Activated naive CD8-positive, alpha-beta T cell treated with anti-CD3 and anti-CD28 coated beads, Interleukin-2, amount 10 ng/mL, durations not matched to agents 7 days and 5 days (primary cell): ENCODE measurements at regions of chr2 and their contacts with region 1.

Region 1: DNA sequence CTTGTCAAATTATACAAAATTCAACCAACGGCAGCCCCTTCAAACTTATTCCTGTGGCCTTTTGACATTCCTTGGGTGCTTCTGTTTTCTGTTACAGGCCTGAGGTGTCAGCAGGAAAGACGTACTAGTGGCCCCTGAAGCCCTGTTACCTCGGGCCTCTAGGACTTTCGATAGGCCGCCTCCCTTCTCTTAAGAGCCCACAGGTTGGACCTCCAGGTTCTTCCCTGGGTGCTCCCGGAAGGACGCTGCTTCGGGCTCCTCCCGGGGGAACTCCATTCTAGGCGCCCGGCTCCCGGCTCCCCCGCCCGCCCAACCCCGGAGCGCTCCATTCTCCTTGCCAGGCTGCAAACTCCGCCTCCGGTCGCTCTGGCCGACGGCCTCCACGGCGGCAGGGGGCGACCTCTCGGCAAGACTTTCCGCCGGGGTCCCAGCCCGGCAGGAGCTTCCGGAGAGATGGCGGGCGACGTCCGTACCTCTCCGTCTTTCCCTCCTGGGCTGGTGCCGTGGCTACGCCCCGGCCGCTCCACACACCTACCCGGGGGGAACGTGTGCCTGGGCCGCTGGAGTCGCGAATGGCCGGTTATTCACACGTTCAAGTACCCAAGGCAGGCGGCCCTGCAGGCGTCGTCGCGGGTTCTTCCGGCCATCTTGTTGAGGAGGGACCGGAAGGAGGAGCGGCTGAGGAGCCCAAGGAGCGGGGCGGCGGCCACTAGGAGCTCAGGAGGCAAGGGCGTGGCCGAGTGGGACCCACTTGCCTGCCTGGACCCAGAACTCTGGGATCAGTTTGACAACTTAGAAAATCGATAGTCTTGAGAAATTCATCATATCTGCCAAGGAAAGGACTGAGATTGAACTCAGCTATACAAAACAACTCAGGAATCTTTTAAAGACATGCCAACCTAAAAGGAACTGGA is 27.5 kb downstream of the BOLA3 start:
- DNase-seq: peak; percentile 92
- ATAC-seq: peak; percentile 97
- H3K4me3 Mint-ChIP-seq: peak overlapping the region; percentile 86
- H3K27ac Mint-ChIP-seq: peak overlapping the region; percentile 86
- H3K4me1 Mint-ChIP-seq: peaks cover 8% of the 10 kb centered on the region
- H3K27me3 Mint-ChIP-seq: peaks cover 3% of the 10 kb centered on the region

Region 2: GRCh38 chr2:73828818-73829570 is 291.2 kb before region 1 on chr2 and contains the start of gene STAMBP:
- POLR2A ChIA-PET with region 1: interaction called, 12 read pairs
- DNase-seq: peak; percentile 87
- ATAC-seq: peak; percentile 92
- H3K4me3 Mint-ChIP-seq: peak within 1 kb of the TSS; percentile 98
- H3K27ac Mint-ChIP-seq: peak within 1 kb of the TSS; percentile 98
- H3K4me1 Mint-ChIP-seq: peaks cover 40% of the 10 kb centered on the region
- H3K27me3 Mint-ChIP-seq: peaks cover 2% of the 10 kb centered on the region
- total RNA-seq, gene STAMBP: 38.9 to 42.1 TPM

Region 3: GRCh38 chr2:74147727-74148456 is 27.7 kb after region 1 on chr2 and contains the start of gene BOLA3:
- POLR2A ChIA-PET with region 1: interaction called, 11 read pairs
- DNase-seq: peak; percentile 91
- ATAC-seq: peak; percentile 96
- H3K4me3 Mint-ChIP-seq: no peak within 1 kb of the TSS
- H3K27ac Mint-ChIP-seq: no peak within 1 kb of the TSS
- H3K4me1 Mint-ChIP-seq: peaks cover 3% of the 10 kb centered on the region
- H3K27me3 Mint-ChIP-seq: no peaks in the 10 kb centered on the region
- total RNA-seq, gene BOLA3: 47.7 to 53.8 TPM

Region 4: GRCh38 chr2:74198461-74199274 is 78.5 kb after region 1 on chr2 and contains the start of gene MTHFD2:
- POLR2A ChIA-PET with region 1: interaction called, 11 read pairs
- DNase-seq: peak; percentile 94
- ATAC-seq: peak; percentile 89
- H3K4me3 Mint-ChIP-seq: peak within 1 kb of the TSS; percentile 99
- H3K27ac Mint-ChIP-seq: peak within 1 kb of the TSS; percentile 100
- H3K4me1 Mint-ChIP-seq: peaks cover 37% of the 10 kb centered on the region
- H3K27me3 Mint-ChIP-seq: no peaks in the 10 kb centered on the region
- total RNA-seq, gene MTHFD2: 127 to 130 TPM

Region 5: DNA sequence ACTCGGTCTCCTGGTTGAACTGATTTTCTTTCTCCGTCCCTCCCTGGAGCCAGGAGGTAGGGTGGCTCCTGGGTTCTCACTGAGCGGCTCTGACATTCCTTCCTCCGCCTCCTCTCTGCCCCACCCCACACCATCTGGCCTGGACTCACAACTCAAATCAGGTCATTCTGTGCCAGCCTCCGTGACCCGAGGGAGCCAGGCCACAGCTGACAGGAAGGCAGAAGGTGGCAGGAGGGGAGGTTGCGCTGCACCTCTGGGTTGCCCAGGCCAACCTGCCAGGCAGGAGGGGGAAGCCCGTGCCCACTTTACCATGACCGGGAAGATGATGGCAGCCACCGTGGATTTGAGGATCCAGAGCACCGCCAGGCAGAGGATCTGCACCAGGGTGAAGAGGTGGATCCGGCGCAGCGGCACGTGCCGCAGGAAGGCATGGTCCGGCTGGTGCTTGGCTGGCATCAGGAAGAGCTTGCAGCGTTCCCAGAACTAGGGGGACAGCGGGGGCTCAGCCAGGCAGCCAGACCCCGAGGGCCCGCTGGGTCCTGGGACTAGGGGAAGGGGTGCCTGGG is 106.6 kb after region 1 on chr2:
- POLR2A ChIA-PET with region 1: no interaction called
- DNase-seq: no peak
- ATAC-seq: no peak
- H3K4me3 Mint-ChIP-seq: no peak overlapping the region
- H3K27ac Mint-ChIP-seq: no peak overlapping the region
- H3K4me1 Mint-ChIP-seq: peaks cover 6% of the 10 kb centered on the region
- H3K27me3 Mint-ChIP-seq: no peaks in the 10 kb centered on the region